ENCODE measurements at regions of chr19 and their contacts with region 1.

Region 1: DNA sequence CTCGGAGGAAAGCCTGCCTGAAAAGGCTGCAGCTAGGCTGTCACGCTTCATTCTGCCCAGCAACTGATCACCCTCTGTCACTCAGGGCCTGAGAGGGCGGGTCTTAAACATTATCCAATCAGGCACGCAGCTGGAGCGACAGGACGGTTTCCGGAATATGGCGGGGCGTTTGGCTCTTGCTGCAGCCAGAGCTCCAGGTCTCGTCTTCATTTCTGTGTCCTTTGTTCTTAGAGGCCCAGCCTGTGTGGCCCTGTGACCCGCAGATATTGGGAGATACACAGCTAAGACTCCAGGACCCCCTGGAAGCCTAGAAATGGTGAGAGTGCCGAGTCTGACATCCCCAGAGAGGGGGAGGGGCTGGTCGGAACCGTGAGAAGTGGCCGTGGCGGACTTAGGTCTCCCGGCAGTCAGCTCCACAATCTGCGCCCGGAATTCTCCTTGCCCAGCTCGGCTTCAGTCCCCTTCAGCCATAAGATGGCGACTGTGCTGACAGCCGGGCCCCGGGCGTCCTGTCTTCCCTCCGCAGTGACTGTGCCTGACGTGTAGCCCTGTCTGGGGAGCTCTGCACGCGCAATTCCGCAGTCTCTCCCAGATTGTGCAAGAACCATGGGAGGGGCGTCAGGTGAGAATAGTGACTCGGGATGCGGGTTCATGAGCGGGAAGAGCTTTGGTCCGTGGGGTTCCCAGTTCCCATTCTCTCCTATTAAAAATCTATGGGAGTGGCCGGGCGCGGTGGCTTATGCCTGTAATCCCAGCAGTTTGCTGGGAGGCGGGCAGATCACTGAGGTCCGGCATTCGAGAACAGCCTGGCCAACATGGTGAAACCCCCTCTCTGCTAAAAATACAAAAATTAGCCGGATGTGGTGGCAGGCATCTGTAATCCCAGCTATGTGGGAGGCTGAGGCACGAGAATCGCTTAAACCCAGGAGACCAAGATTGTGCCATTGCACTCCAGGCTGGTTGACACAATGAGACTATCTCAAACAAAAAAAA is at the start of gene ZNF429:
- DNase-seq: peak; percentile 81 to 96 (median 91)
- ATAC-seq: peak; percentile 98
- H3K4me3 ChIP-seq: peak within 1 kb of the TSS; percentile 75 to 78
- H3K4me3 Mint-ChIP-seq: peak within 1 kb of the TSS; percentile 100
- H3K27ac ChIP-seq: peak within 1 kb of the TSS; percentile 92 to 95
- H3K27ac Mint-ChIP-seq: peak within 1 kb of the TSS; percentile 100
- H3K4me1 ChIP-seq: peaks cover 24% of the 10 kb centered on the region
- H3K4me1 Mint-ChIP-seq: peaks cover 52% of the 10 kb centered on the region
- H3K27me3 ChIP-seq: no peaks in the 10 kb centered on the region
- H3K27me3 Mint-ChIP-seq: no peaks in the 10 kb centered on the region
- CTCF ChIP-seq: no peak
- total RNA-seq, gene ZNF429: 9.6 to 11.2 TPM

Region 2: DNA sequence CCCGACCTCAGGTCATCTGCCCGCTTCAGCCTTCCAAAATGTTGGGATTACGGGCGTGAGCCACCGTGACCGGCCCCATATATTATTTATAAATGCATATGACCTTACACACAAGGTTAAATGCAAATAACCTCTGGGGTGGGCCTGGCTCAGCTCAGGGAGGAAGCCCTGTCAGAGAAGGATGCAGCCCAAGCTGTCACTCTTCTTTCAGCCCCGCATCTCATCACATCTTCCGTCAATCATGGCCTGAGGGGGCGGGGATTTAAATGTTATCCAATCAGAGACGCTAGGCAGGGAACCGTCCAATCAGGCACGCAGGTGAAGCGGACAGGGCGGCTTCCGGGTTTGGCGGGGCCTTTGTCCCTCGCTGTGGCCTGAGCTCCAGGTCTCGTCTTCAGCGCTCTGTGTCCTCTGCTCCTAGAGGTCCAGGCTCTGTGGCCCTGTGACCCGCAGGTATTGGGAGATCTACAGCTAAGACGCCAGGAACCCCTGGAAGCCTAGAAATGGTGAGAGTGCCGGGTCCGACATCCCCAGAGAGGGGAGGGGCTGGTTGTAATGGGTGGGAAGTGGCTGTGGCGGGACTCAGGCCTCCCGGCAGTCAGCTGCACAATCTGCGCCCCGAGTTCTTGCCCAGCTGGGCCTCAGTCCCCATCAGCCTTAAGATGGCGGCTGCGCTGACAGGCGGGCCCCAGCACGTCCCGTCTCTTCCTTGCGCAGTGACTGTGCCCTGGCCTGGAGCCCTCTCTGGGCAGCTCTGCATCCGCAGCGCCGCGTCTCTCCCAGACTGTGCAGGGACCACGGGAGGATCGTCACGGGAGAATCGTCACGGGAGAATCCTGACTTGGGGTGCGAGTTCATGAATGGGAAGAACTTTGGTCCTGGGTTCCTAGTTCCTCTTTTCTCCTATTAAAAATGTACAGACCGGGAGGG is 485.2 kb before region 1 on chr19 and contains the start of gene ZNF430:
- CTCF ChIA-PET with region 1: no interaction called
- POLR2A ChIA-PET with region 1: interaction called, 5 read pairs
- intact Hi-C with region 1: loop called in 1 of 2 experiments (anchors 5 kb)
- DNase-seq: peak; percentile 86 to 97 (median 93)
- ATAC-seq: peak; percentile 95
- H3K4me3 ChIP-seq: peak within 1 kb of the TSS; percentile 65 to 91
- H3K4me3 Mint-ChIP-seq: peak within 1 kb of the TSS; percentile 100
- H3K27ac ChIP-seq: peak within 1 kb of the TSS; percentile 92 to 95
- H3K27ac Mint-ChIP-seq: peak within 1 kb of the TSS; percentile 100
- H3K4me1 ChIP-seq: peaks cover 26% of the 10 kb centered on the region
- H3K4me1 Mint-ChIP-seq: peaks cover 48% of the 10 kb centered on the region
- H3K27me3 ChIP-seq: no peaks in the 10 kb centered on the region
- H3K27me3 Mint-ChIP-seq: no peaks in the 10 kb centered on the region
- CTCF ChIP-seq: no peak
- total RNA-seq, gene ZNF430: 42.3 to 45.1 TPM

Region 3: GRCh38 chr19:21082011-21082975 is 423.5 kb before region 1 on chr19 and contains the start of gene ZNF714:
- CTCF ChIA-PET with region 1: no interaction called
- POLR2A ChIA-PET with region 1: no interaction called
- intact Hi-C with region 1: no loop called
- DNase-seq: peak; percentile 63 to 89 (median 79)
- ATAC-seq: peak; percentile 100
- H3K4me3 ChIP-seq: peak within 1 kb of the TSS; percentile 63 to 89
- H3K4me3 Mint-ChIP-seq: peak within 1 kb of the TSS; percentile 96
- H3K27ac ChIP-seq: peak within 1 kb of the TSS; percentile 32 to 68
- H3K27ac Mint-ChIP-seq: peak within 1 kb of the TSS; percentile 88
- H3K4me1 ChIP-seq: no peaks in the 10 kb centered on the region
- H3K4me1 Mint-ChIP-seq: peaks cover 9% of the 10 kb centered on the region
- H3K27me3 ChIP-seq: no peaks in the 10 kb centered on the region
- H3K27me3 Mint-ChIP-seq: no peaks in the 10 kb centered on the region
- CTCF ChIP-seq: no peak
- total RNA-seq, gene ZNF714: 7.5 to 8.5 TPM

Region 4: GRCh38 chr19:21396893-21397572 is 108.7 kb before region 1 on chr19 and contains the start of gene ZNF493:
- CTCF ChIA-PET with region 1: interaction called, 3 read pairs
- POLR2A ChIA-PET with region 1: interaction called, 6 read pairs
- intact Hi-C with region 1: loop called (anchors 1 kb)
- DNase-seq: peak; percentile 82 to 96 (median 92)
- ATAC-seq: peak; percentile 99
- H3K4me3 ChIP-seq: peak within 1 kb of the TSS; percentile 73 to 95
- H3K4me3 Mint-ChIP-seq: peak within 1 kb of the TSS; percentile 97
- H3K27ac ChIP-seq: peak within 1 kb of the TSS; percentile 72 to 76
- H3K27ac Mint-ChIP-seq: peak within 1 kb of the TSS; percentile 94
- H3K4me1 ChIP-seq: peaks cover 15% of the 10 kb centered on the region
- H3K4me1 Mint-ChIP-seq: peaks cover 38% of the 10 kb centered on the region
- H3K27me3 ChIP-seq: no peaks in the 10 kb centered on the region
- H3K27me3 Mint-ChIP-seq: no peaks in the 10 kb centered on the region
- CTCF ChIP-seq: no peak
- total RNA-seq, gene ZNF493: 44.6 to 46.1 TPM

Region 5: GRCh38 chr19:21580101-21580500 is 74.3 kb after region 1 on chr19:
- CTCF ChIA-PET with region 1: interaction called, 12 read pairs
- POLR2A ChIA-PET with region 1: interaction called, 34 read pairs
- intact Hi-C with region 1: loop called (anchors 2 to 5 kb)
- DNase-seq: peak in 1 of 9 experiments; percentile 47
- ATAC-seq: peak; percentile 38
- H3K4me3 ChIP-seq: peak overlapping the region in 1 of 2 experiments; percentile 22
- H3K4me3 Mint-ChIP-seq: peak overlapping the region; percentile 24
- H3K27ac ChIP-seq: peak overlapping the region; percentile 0 to 59
- H3K27ac Mint-ChIP-seq: peak overlapping the region; percentile 80
- H3K4me1 ChIP-seq: peaks cover 36% of the 10 kb centered on the region
- H3K4me1 Mint-ChIP-seq: peaks cover 59% of the 10 kb centered on the region
- H3K27me3 ChIP-seq: no peaks in the 10 kb centered on the region
- H3K27me3 Mint-ChIP-seq: no peaks in the 10 kb centered on the region
- CTCF ChIP-seq: no peak

Region 6: GRCh38 chr19:21767065-21767800 is 261.5 kb after region 1 on chr19 and contains the start of gene ZNF100:
- CTCF ChIA-PET with region 1: no interaction called
- POLR2A ChIA-PET with region 1: interaction called, 9 read pairs
- intact Hi-C with region 1: loop called in 1 of 2 experiments (anchors 1 kb)
- DNase-seq: peak; percentile 72 to 93 (median 87)
- ATAC-seq: peak; percentile 98
- H3K4me3 ChIP-seq: peak within 1 kb of the TSS; percentile 86 to 98
- H3K4me3 Mint-ChIP-seq: peak within 1 kb of the TSS; percentile 97
- H3K27ac ChIP-seq: peak within 1 kb of the TSS; percentile 71 to 87
- H3K27ac Mint-ChIP-seq: peak within 1 kb of the TSS; percentile 86
- H3K4me1 ChIP-seq: peaks cover 3% of the 10 kb centered on the region
- H3K4me1 Mint-ChIP-seq: peaks cover 21% of the 10 kb centered on the region
- H3K27me3 ChIP-seq: no peaks in the 10 kb centered on the region
- H3K27me3 Mint-ChIP-seq: no peaks in the 10 kb centered on the region
- CTCF ChIP-seq: no peak
- total RNA-seq, gene ZNF100: 5.9 to 6.7 TPM